ENCODE measurements at regions of chr16 and their contacts with region 1.

Region 1: GRCh38 chr16:48687421-48688038 is 77.5 kb upstream of the N4BP1 start:
- DNase-seq: peak; percentile 9
- H3K4me3 ChIP-seq: no peak overlapping the region
- H3K27ac ChIP-seq: no peak overlapping the region
- H3K4me1 ChIP-seq: no peaks in the 10 kb centered on the region
- H3K27me3 ChIP-seq: no peaks in the 10 kb centered on the region
- CTCF ChIP-seq: peak in 3 of 4 experiments; percentile 52 to 55 (median 55)
- POLR2A ChIP-seq: no peak

Region 2: DNA sequence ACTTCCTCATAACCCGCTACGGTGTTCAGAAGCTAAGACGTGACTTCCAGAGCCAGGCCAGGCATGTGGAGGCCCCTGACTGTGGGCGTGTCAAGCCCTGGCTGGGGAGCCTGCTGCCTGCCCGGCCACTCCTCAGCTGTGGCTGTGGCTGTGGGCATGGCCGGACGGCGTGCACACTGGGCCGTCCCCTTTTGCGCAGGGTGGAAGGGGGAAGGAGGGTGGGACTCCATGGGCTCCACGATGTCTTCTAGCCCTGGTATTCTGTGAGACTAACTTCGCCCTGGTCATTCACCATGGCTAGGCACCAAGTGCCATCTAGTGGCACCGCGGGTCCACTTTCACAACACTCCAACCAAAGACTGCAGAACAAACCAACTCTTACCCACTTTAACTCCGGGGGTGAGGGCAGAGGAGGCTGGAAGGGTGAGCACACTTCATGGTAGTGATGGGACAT is 145.5 kb before region 1 on chr16:
- intact Hi-C with region 1: no loop called
- DNase-seq: peak; percentile 42
- H3K4me3 ChIP-seq: no peak overlapping the region
- H3K27ac ChIP-seq: peak overlapping the region in 1 of 2 donors; percentile 4
- H3K4me1 ChIP-seq: no peaks in the 10 kb centered on the region
- H3K27me3 ChIP-seq: no peaks in the 10 kb centered on the region
- CTCF ChIP-seq: peak in 3 of 4 experiments; percentile 44 to 64 (median 60)
- POLR2A ChIP-seq: no peak

Region 3: GRCh38 chr16:49350265-49351095 is 663.0 kb after region 1 on chr16:
- intact Hi-C with region 1: loop called (anchors 2 kb)
- DNase-seq: peak; percentile 37
- H3K4me3 ChIP-seq: no peak overlapping the region
- H3K27ac ChIP-seq: no peak overlapping the region
- H3K4me1 ChIP-seq: no peaks in the 10 kb centered on the region
- H3K27me3 ChIP-seq: peaks cover 8% of the 10 kb centered on the region
- CTCF ChIP-seq: peak; percentile 59 to 69 (median 66)
- POLR2A ChIP-seq: no peak

Region 4: DNA sequence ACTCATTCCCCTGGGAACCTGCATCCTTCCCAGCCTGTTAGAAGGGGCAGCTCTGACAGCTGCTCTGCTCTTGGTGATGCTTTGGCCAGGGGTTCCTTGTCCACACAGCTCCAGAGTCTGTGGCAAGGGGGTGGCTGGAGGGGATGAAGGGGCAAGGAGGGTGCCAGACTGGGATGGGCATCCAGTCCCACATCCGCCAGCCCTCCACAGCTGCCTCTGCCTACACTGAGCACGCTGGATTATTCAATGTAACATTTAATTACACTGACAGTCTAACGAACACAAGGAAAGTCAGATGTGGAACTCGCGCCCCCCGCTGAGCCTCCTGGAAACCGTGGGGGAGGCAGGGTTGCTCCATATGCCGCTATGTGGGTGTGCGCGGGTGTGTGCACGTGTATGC is 787.2 kb after region 1 on chr16:
- intact Hi-C with region 1: no loop called
- DNase-seq: no peak
- H3K4me3 ChIP-seq: no peak overlapping the region
- H3K27ac ChIP-seq: no peak overlapping the region
- H3K4me1 ChIP-seq: no peaks in the 10 kb centered on the region
- H3K27me3 ChIP-seq: no peaks in the 10 kb centered on the region
- CTCF ChIP-seq: no peak
- POLR2A ChIP-seq: no peak